ENCODE measurements at regions of chr1 and their contacts with region 1.

Region 1: GRCh38 chr1:40951943-40952743 is 27.4 kb upstream of the CTPS1 start:
- DNase-seq: peak; percentile 77
- H3K4me3 Mint-ChIP-seq: no peak overlapping the region
- H3K27ac Mint-ChIP-seq: no peak overlapping the region
- H3K4me1 Mint-ChIP-seq: peaks cover 22% of the 10 kb centered on the region
- H3K27me3 Mint-ChIP-seq: peaks cover 64% of the 10 kb centered on the region

Region 2: GRCh38 chr1:40610156-40610555 is 342.0 kb before region 1 on chr1:
- CTCF ChIA-PET with region 1: interaction called, 10 read pairs
- DNase-seq: no peak
- H3K4me3 Mint-ChIP-seq: no peak overlapping the region
- H3K27ac Mint-ChIP-seq: no peak overlapping the region
- H3K4me1 Mint-ChIP-seq: no peaks in the 10 kb centered on the region
- H3K27me3 Mint-ChIP-seq: peaks cover 11% of the 10 kb centered on the region

Region 3: GRCh38 chr1:40862008-40862863 is 89.9 kb before region 1 on chr1 and contains the start of gene CITED4:
- CTCF ChIA-PET with region 1: interaction called, 159 read pairs
- DNase-seq: peak; percentile 96
- H3K4me3 Mint-ChIP-seq: peak within 1 kb of the TSS; percentile 76
- H3K27ac Mint-ChIP-seq: peak within 1 kb of the TSS; percentile 96
- H3K4me1 Mint-ChIP-seq: peaks cover 29% of the 10 kb centered on the region
- H3K27me3 Mint-ChIP-seq: peaks cover 45% of the 10 kb centered on the region

Region 4: DNA sequence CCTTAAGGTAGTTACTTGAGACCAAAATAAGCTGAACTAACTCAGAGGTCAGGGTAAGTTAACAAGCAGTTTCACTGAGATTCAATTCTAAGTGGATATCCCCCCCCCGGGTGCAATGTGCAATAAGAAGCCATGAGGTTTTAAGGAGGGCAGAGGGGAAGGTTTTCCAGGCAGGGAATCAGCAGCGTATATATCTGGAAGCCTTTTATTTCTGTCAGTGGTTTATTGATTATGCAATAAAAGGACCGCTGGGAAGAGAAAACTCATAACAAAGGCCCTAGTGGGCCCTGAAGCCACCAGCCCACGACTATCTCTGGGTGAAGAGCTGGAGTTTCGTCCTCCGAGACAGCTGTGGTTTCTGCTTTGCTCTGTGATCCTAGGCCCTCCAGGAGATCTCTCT is 25.7 kb before region 1 on chr1:
- CTCF ChIA-PET with region 1: interaction called, 23 read pairs
- DNase-seq: no peak
- H3K4me3 Mint-ChIP-seq: no peak overlapping the region
- H3K27ac Mint-ChIP-seq: no peak overlapping the region
- H3K4me1 Mint-ChIP-seq: no peaks in the 10 kb centered on the region
- H3K27me3 Mint-ChIP-seq: peaks cover 26% of the 10 kb centered on the region

Region 5: GRCh38 chr1:41003640-41004220 is 51.6 kb after region 1 on chr1:
- CTCF ChIA-PET with region 1: interaction called, 10 read pairs
- DNase-seq: peak; percentile 88
- H3K4me3 Mint-ChIP-seq: no peak overlapping the region
- H3K27ac Mint-ChIP-seq: peak overlapping the region; percentile 76
- H3K4me1 Mint-ChIP-seq: peaks cover 34% of the 10 kb centered on the region
- H3K27me3 Mint-ChIP-seq: no peaks in the 10 kb centered on the region

Measured in activated naive CD4-positive, alpha-beta T cell treated with anti-CD3 and anti-CD28 coated beads, Interleukin-2, amount 10 ng/mL, durations not matched to agents 7 days and 5 days (primary cell).